GM12878 (cell line): ENCODE measurements at regions of chr15 and their contacts with region 1.

Region 1: DNA sequence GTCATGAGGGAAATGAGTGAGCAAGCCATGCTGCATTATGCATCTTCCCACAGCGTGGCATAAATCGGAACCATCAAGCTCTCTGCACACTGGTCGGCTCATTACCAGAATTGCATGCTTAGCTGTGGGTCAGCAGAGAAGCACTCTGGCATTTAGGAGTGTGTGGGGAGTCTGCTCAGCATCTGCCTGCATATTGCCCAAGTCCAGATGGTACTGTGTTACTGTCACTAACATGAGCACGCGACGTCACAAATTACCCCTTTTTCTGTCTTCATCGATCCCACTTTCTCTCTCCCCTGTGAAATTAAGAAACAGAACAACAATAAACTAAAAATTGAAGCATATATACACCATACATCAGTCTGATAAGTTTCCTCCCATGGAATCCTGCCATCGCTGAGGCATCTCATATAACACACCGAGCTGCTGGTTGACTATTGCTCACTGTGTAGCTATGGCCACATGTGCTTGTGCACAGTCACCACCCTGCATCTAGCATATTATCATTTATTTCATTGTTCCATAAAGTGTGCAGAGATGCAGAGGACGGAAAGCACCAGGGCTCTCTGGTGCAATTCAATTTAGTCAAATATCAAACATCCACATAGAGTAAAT is 778.0 kb upstream of the ARRDC4 start:
- DNase-seq: no peak
- ATAC-seq: no peak
- H3K4me3 ChIP-seq: no peak overlapping the region
- H3K27ac ChIP-seq: no peak overlapping the region
- H3K4me1 ChIP-seq: no peaks in the 10 kb centered on the region
- H3K27me3 ChIP-seq: no peaks in the 10 kb centered on the region
- CTCF ChIP-seq: no peak
- EP300 ChIP-seq: no peak
- POLR2A ChIP-seq: no peak
- RAD21 ChIP-seq: no peak

Region 2: DNA sequence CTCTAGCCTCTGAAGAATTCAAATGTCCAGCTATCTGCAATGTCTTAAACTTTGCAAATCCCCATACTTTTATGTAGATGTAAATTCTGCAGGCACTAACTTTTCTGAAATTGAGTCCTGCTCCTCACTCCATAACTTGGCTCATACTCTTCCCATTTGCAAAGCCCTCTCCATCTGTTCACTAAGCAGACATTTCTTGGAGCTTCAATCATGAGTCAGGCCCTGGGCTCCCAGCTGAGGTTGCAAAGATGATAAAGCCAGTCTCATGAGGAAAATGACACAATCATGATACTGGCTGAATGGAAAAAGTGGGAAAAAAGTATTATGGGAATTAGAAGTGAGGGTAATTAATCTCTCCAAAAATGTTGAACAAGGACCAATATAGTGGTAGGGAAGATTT is 344.4 kb before region 1 on chr15:
- CTCF ChIA-PET with region 1: no interaction called
- POLR2A ChIA-PET with region 1: no interaction called
- RAD21 ChIA-PET with region 1: no interaction called
- SMC1A ChIA-PET with region 1: no interaction called
- in situ Hi-C with region 1: no loop called
- intact Hi-C with region 1: no loop called
- DNase-seq: no peak
- ATAC-seq: no peak
- H3K4me3 ChIP-seq: no peak overlapping the region
- H3K27ac ChIP-seq: no peak overlapping the region
- H3K4me1 ChIP-seq: no peaks in the 10 kb centered on the region
- H3K27me3 ChIP-seq: no peaks in the 10 kb centered on the region
- CTCF ChIP-seq: no peak
- EP300 ChIP-seq: no peak
- POLR2A ChIP-seq: no peak
- RAD21 ChIP-seq: no peak

Region 3: GRCh38 chr15:96992817-96993216 is 189.7 kb before region 1 on chr15:
- CTCF ChIA-PET with region 1: no interaction called
- POLR2A ChIA-PET with region 1: no interaction called
- RAD21 ChIA-PET with region 1: no interaction called
- SMC1A ChIA-PET with region 1: no interaction called
- in situ Hi-C with region 1: no loop called
- intact Hi-C with region 1: no loop called
- DNase-seq: no peak
- ATAC-seq: peak; percentile 69
- H3K4me3 ChIP-seq: no peak overlapping the region
- H3K27ac ChIP-seq: no peak overlapping the region
- H3K4me1 ChIP-seq: no peaks in the 10 kb centered on the region
- H3K27me3 ChIP-seq: no peaks in the 10 kb centered on the region
- CTCF ChIP-seq: no peak
- EP300 ChIP-seq: no peak
- POLR2A ChIP-seq: no peak
- RAD21 ChIP-seq: no peak

Region 4: DNA sequence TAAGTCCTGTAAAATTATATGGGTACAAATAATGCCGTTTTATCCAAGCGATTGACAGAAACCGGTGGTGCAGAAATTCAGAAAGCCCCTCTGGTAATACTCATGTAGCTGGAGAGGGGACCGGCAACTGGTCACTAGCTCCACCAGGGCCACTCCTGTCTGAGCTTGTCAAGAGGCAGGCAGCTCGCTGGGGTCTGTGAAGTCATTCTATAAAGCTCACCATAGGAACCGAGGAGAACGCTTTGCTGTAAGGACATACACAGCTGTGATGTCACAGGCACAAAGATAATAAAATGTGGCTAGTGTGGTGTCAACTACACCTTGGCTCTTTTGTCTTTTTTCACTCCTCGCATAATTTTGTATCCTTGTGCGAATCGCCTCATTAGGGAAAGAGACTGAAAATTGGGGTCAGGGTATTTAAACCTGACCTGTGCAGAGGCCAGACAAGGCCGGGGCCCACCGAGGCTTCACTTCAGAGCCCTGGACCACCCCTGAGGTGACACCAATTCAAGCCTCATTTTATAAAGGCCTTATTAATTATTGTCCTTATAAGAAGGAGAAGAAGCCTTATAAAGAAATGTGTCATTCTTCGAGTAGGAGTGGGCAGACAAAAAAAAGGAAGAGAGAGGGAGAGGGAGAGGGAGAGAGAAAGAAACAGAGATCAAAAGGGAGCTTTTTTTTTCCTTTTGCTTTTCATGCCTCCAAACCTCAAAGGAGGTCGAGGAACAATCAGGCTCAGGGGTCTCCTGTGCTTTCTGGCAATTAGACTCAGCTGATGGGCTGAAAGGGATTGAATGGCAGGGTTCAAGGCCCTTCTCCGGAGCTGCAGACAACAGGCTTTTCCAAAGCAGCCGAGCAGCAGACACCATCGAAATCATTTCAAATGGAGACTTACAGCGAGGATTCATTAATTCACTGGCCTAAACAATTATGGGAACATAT is 35.3 kb before region 1 on chr15:
- CTCF ChIA-PET with region 1: interaction called, 3 read pairs
- POLR2A ChIA-PET with region 1: interaction called, 8 read pairs
- RAD21 ChIA-PET with region 1: interaction called, 3 read pairs
- SMC1A ChIA-PET with region 1: interaction called, 11 read pairs
- in situ Hi-C with region 1: no loop called
- intact Hi-C with region 1: no loop called
- DNase-seq: no peak
- ATAC-seq: no peak
- H3K4me3 ChIP-seq: no peak overlapping the region
- H3K27ac ChIP-seq: no peak overlapping the region
- H3K4me1 ChIP-seq: no peaks in the 10 kb centered on the region
- H3K27me3 ChIP-seq: no peaks in the 10 kb centered on the region
- CTCF ChIP-seq: no peak
- EP300 ChIP-seq: no peak
- POLR2A ChIP-seq: no peak
- RAD21 ChIP-seq: no peak

Region 5: GRCh38 chr15:97259943-97260342 is 77.5 kb after region 1 on chr15:
- CTCF ChIA-PET with region 1: no interaction called
- POLR2A ChIA-PET with region 1: no interaction called
- RAD21 ChIA-PET with region 1: no interaction called
- SMC1A ChIA-PET with region 1: no interaction called
- in situ Hi-C with region 1: no loop called
- intact Hi-C with region 1: no loop called
- DNase-seq: no peak
- ATAC-seq: no peak
- H3K4me3 ChIP-seq: no peak overlapping the region
- H3K27ac ChIP-seq: no peak overlapping the region
- H3K4me1 ChIP-seq: no peaks in the 10 kb centered on the region
- H3K27me3 ChIP-seq: no peaks in the 10 kb centered on the region
- CTCF ChIP-seq: no peak
- EP300 ChIP-seq: no peak
- POLR2A ChIP-seq: no peak
- RAD21 ChIP-seq: no peak